CD8-positive, alpha-beta memory T cell (primary cell): ENCODE measurements at regions of chr15 and their contacts with region 1.

Region 1: GRCh38 chr15:63610200-63610841 is 13.1 kb downstream of the FBXL22 start:
- DNase-seq: peak; percentile 51 to 80 (median 63)
- H3K4me3 ChIP-seq: no peak overlapping the region
- H3K4me3 Mint-ChIP-seq: peak overlapping the region in 6 of 7 donors; percentile 1 to 78 (median 29)
- H3K27ac ChIP-seq: no peak overlapping the region
- H3K27ac Mint-ChIP-seq: peak overlapping the region; percentile 70 to 96 (median 92)
- H3K4me1 ChIP-seq: peaks cover 31% of the 10 kb centered on the region
- H3K4me1 Mint-ChIP-seq: peaks cover 40 to 52% (median 41%) of the 10 kb centered on the region in 3 donors
- H3K27me3 ChIP-seq: no peaks in the 10 kb centered on the region
- H3K27me3 Mint-ChIP-seq: peaks cover 0 to 2% of the 10 kb centered on the region in 2 donors

Region 2: DNA sequence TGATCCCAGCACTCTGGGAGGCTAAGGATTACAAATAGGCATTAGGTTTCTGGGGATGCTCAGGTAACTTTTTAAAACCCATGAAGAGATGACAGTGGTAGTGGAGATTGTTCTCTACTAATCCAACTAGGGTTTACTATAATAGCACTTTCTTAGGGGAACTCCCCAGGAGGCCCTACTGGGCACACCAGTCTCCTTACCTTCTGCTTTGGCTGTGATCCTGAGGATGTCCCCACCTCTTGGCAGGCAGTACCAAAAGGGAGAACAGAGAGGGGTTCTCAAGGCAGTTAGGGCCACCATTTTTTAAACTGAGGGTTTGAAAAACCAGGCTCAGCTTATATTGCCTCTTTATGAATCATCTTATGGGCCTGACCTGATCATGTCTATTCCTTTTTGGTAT is 28.1 kb before region 1 on chr15:
- CTCF ChIA-PET with region 1: no interaction called
- POLR2A ChIA-PET with region 1: no interaction called
- DNase-seq: no peak
- H3K4me3 ChIP-seq: no peak overlapping the region
- H3K4me3 Mint-ChIP-seq: no peak overlapping the region
- H3K27ac ChIP-seq: no peak overlapping the region
- H3K27ac Mint-ChIP-seq: peak overlapping the region in 7 of 8 donors; percentile 5 to 86 (median 64)
- H3K4me1 ChIP-seq: no peaks in the 10 kb centered on the region
- H3K4me1 Mint-ChIP-seq: peaks cover 15 to 32% (median 22%) of the 10 kb centered on the region in 3 donors
- H3K27me3 ChIP-seq: no peaks in the 10 kb centered on the region
- H3K27me3 Mint-ChIP-seq: no peaks in the 10 kb centered on the region

Region 3: DNA sequence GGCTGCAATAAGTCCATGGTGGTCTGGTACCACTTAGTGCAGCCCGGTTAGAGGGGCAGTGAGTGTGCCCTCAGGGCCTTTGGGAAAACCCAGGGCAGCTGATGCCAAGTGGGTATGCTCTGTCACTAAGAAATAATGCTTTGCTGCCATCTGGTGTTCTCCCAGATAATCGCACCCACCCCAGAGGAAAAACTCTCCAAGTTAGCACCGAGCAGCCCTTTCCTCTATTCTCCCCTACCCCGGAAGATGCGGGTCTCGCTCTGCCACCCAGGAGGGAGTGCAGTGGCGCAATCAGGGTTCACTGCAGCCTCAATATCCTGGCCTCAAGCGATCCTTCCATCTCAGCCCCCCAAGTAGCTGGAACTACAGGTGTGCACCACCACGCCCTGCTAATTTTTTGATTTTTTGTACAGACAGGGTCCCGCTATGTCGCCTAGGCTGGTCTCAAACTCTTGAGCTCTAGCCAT is 457.3 kb after region 1 on chr15:
- CTCF ChIA-PET with region 1: interaction called, 26 read pairs
- POLR2A ChIA-PET with region 1: no interaction called
- DNase-seq: peak; percentile 51 to 71 (median 59)
- H3K4me3 ChIP-seq: no peak overlapping the region
- H3K4me3 Mint-ChIP-seq: peak overlapping the region in 3 of 7 donors; percentile 15 to 46 (median 29)
- H3K27ac ChIP-seq: no peak overlapping the region
- H3K27ac Mint-ChIP-seq: peak overlapping the region in 3 of 8 donors; percentile 66 to 82 (median 76)
- H3K4me1 ChIP-seq: peaks cover 6% of the 10 kb centered on the region
- H3K4me1 Mint-ChIP-seq: peaks cover 8 to 9% (median 8%) of the 10 kb centered on the region in 3 donors
- H3K27me3 ChIP-seq: no peaks in the 10 kb centered on the region
- H3K27me3 Mint-ChIP-seq: no peaks in the 10 kb centered on the region